GM13976 (cell line): ENCODE measurements at regions of chr3 and their contacts with region 1.

Region 1: DNA sequence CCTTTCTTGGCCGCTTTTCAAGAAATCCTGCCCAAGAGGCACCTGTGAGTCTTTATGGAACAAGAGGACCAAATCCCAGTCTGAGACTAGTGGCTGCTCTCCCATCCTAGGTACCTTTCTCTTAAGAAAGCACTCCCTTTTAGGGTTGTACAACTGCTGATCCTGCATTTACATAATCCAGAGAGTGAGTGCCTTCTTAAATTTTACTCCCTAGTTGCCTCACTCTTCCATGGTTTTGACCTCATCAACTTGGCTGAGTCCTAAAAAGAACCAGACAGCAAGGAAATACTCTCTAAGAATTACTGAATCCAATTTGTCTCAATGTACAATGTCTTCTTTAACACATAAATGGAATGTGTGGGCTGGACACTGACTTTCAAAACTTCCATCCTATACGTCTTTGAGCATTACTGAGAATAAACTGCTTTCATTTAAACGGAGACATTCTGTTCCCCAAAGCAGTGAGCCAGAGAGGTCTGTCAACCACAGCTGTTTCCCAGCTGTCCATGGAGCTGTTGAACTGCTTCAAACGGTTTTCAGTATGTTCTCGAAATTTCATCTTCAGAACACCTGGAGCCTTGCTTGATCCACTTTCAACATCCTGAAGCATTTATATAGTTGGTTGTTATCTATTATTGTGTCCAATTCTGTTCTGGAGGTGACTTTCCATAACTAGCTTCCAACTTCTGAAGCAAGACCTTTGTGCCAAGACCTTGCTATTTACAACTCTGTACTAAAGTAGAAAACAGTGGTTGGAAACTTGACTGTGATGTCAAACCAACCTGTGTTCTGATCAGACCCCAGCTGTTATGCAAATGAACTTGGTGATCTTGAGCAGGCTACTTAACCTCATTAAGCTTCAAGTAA is 179.1 kb downstream of the SLC9A9 start:
- DNase-seq: peak; percentile 35
- CTCF ChIP-seq: no peak

Region 2: GRCh38 chr3:143121241-143122088 is 547.7 kb before region 1 on chr3:
- in situ Hi-C with region 1: loop called (anchors 10 kb)
- DNase-seq: peak; percentile 72
- CTCF ChIP-seq: peak; percentile 60

Region 3: DNA sequence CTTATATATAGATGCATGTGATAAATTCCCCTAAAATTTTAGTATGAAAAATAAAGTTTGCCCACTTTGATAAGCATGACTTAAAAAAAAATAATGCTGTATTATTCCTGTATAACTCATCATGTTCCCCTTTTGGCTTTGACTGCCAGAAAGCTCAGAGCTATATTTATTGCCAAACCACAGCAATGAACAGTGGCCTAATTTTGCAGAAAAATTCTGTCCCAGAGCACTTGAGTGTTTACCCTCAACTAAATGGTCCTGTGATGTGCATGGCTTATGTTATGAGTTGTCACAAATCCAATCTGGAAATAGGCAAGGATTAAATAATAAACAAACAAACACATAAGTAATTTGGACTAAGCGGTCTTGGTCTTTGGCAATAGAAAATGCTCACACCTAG is 97.6 kb before region 1 on chr3:
- in situ Hi-C with region 1: no loop called
- DNase-seq: no peak
- CTCF ChIP-seq: no peak

Region 4: GRCh38 chr3:145197092-145197805 is 1528.1 kb after region 1 on chr3:
- in situ Hi-C with region 1: no loop called
- DNase-seq: no peak
- CTCF ChIP-seq: no peak